ENCODE measurements at regions of chr1 and their contacts with region 1.

Region 1: DNA sequence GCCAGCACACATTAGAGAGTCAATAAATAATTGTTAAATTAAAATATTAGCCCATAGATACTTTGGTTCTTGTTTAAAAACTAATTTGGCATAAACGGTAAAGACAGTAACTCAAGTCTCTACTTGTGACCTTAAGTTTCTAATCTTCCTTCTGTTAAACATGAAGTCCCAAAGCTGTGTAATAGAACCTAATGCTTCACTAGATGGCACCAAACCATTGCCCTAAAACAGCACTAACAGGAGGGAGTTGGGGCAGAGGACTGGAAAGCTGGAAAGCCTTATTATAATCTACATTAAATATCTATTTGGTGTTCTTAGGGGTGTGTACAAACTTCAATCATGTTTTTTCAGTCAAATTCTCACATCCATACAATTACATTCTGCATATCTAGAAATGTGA is 176.7 kb downstream of the OLFM3 start:
- DNase-seq: no peak
- ATAC-seq: peak; percentile 51 to 63
- H3K4me3 ChIP-seq: no peak overlapping the region
- H3K27ac ChIP-seq: no peak overlapping the region
- H3K4me1 ChIP-seq: no peaks in the 10 kb centered on the region
- H3K27me3 ChIP-seq: no peaks in the 10 kb centered on the region

Region 2: DNA sequence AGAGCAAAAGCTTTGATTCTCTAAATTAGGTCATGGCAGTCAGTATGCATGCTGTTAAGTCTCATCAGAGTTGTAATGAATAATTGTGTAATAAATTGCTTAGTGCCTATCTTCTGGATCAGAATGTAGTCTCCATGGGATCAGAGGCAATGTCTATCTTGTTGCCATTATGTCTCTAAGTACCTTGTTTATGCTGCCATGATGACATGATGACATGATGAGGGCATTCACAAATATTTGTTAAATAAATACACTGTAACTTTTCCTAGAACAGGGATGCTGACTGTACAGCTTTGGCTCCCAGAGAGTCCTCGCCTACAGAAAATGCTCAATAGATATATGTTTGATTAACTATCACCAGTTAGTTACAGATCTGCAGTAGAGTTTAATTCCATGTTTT is 108.0 kb before region 1 on chr1:
- intact Hi-C with region 1: no loop called
- DNase-seq: no peak
- ATAC-seq: no peak
- H3K4me3 ChIP-seq: no peak overlapping the region
- H3K27ac ChIP-seq: no peak overlapping the region
- H3K4me1 ChIP-seq: no peaks in the 10 kb centered on the region
- H3K27me3 ChIP-seq: no peaks in the 10 kb centered on the region

Region 3: DNA sequence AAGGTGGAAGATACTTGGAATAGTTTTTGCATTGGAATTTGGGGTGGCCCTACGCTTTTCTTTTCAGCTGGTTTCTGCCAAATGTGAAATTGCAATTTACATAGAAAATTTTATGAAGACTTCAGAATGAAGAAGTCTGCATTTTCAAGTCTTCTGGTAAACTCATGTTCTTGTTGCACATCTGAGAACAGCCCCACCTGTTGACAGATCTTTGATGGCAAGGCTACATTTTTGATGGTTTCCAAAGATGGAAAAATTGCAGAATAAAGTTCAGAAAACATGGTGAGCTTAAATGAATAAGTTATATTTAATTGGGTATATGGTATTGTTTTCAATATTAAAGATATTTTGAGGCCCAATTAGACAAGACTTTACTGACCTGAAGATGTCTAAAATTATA is 151.2 kb after region 1 on chr1:
- intact Hi-C with region 1: loop called in 2 of 4 experiments (anchors 5 to 10 kb)
- DNase-seq: no peak
- ATAC-seq: no peak
- H3K4me3 ChIP-seq: no peak overlapping the region
- H3K27ac ChIP-seq: no peak overlapping the region
- H3K4me1 ChIP-seq: no peaks in the 10 kb centered on the region
- H3K27me3 ChIP-seq: no peaks in the 10 kb centered on the region

Region 4: DNA sequence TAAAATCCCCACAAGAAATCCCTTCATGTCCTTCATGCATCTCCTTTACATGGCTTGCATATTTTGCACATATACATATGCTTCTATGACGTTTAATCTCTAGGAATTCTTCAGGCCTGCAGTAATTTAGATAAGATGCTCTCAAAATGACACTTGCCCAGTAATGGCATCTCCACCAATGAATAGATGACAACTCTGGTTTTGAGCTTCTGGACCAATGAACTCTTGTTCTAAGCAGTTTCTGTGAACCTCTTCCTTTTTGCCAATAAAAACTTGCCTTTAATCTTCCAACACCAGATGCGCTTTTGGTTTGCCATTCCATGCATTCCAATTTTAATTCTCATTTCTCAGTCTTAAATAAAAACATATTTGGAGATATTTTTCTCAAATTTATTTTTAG is 366.5 kb after region 1 on chr1:
- intact Hi-C with region 1: loop called in 2 of 4 experiments (anchors 5 kb)
- DNase-seq: no peak
- ATAC-seq: no peak
- H3K4me3 ChIP-seq: no peak overlapping the region
- H3K27ac ChIP-seq: no peak overlapping the region
- H3K4me1 ChIP-seq: no peaks in the 10 kb centered on the region
- H3K27me3 ChIP-seq: no peaks in the 10 kb centered on the region

Region 5: GRCh38 chr1:102191723-102192122 is 371.7 kb after region 1 on chr1:
- intact Hi-C with region 1: loop called in 2 of 4 experiments (anchors 5 kb)
- DNase-seq: no peak
- ATAC-seq: peak; percentile 69 to 70
- H3K4me3 ChIP-seq: no peak overlapping the region
- H3K27ac ChIP-seq: no peak overlapping the region
- H3K4me1 ChIP-seq: no peaks in the 10 kb centered on the region
- H3K27me3 ChIP-seq: no peaks in the 10 kb centered on the region